ENCODE measurements at regions of chr1 and their contacts with region 1.

Region 1: GRCh38 chr1:23772049-23772853 is 6.0 kb upstream of the PITHD1 start:
- DNase-seq: peak; percentile 72 to 85 (median 77)
- H3K4me3 ChIP-seq: no peak overlapping the region
- H3K4me3 Mint-ChIP-seq: peak overlapping the region in 3 of 8 donors; percentile 24 to 60 (median 55)
- H3K27ac ChIP-seq: no peak overlapping the region
- H3K27ac Mint-ChIP-seq: peak overlapping the region in 1 of 7 donors; percentile 31
- H3K4me1 ChIP-seq: peaks cover 6% of the 10 kb centered on the region
- H3K4me1 Mint-ChIP-seq: peaks cover 3 to 10% (median 5%) of the 10 kb centered on the region in 4 donors
- H3K27me3 ChIP-seq: no peaks in the 10 kb centered on the region
- H3K27me3 Mint-ChIP-seq: no peaks in the 10 kb centered on the region

Region 2: DNA sequence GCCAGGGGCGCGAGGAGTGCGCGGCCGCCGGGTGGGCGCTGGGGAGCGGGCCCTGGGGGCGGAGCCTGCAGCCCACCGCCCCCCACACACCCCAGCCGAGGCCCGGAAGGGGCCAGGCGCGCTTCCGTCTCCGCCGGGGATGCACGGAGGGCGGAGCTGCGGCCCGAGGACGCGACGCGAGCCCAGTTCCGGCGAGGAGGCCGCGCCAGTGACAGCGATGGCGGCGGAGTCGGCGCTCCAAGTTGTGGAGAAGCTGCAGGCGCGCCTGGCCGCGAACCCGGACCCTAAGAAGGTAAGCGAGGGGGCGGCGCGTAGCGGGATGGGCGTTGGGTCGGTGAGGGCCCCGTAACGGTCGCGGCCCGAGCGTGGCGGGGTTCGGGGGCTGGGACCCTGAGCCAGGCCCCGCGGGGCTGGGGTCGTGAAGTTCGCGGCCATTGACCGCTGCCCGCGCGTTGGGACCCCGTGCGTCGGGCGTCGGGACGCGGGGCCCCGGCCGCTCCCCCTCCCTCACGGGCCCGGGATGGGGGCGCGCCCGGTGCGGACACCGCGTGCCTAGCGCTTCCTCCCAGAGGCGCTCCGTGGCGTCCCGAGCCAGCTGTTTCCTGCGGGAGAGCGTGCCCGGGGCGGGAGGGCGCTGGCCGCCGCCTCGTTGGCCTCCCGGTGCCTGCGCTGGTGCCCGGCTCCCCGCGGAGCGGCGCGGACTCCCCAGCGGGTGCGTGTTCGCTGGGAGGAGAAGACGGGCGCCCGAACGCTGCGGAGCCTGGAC is 28.8 kb before region 1 on chr1 and contains the start of gene ELOA:
- CTCF ChIA-PET with region 1: interaction called, 12 read pairs
- POLR2A ChIA-PET with region 1: interaction called, 3 read pairs
- intact Hi-C with region 1: loop called (anchors 5 kb)
- DNase-seq: peak; percentile 74 to 78 (median 77)
- H3K4me3 ChIP-seq: peak within 1 kb of the TSS; percentile 75 to 89
- H3K4me3 Mint-ChIP-seq: peak within 1 kb of the TSS; percentile 91 to 97 (median 92)
- H3K27ac ChIP-seq: peak within 1 kb of the TSS; percentile 87
- H3K27ac Mint-ChIP-seq: peak within 1 kb of the TSS; percentile 92 to 95 (median 94)
- H3K4me1 ChIP-seq: peaks cover 50% of the 10 kb centered on the region
- H3K4me1 Mint-ChIP-seq: peaks cover 37 to 57% (median 46%) of the 10 kb centered on the region in 4 donors
- H3K27me3 ChIP-seq: no peaks in the 10 kb centered on the region
- H3K27me3 Mint-ChIP-seq: no peaks in the 10 kb centered on the region
- total RNA-seq, gene ELOA: 28.3 to 31.7 TPM

Region 3: DNA sequence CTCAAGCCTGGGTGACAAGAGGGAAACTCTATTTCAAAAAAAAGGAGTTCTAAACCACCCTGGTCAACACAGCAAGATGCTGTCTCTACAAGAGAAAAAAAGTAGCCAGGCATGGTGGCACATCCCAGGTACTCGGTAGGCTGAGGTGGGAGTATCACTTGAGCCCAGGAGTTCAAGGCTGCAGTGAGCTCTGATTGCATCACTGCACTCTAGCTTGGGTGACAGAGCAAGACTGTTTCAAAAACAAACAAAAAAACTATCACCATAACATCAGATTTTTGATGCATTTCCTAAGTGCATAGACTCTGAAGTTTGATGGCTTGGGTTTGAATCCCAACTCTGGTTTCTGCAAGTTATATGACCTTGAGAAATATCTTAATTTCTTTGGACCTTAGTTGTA is 19.3 kb before region 1 on chr1:
- CTCF ChIA-PET with region 1: interaction called, 13 read pairs
- POLR2A ChIA-PET with region 1: no interaction called
- intact Hi-C with region 1: no loop called
- DNase-seq: no peak
- H3K4me3 ChIP-seq: no peak overlapping the region
- H3K4me3 Mint-ChIP-seq: no peak overlapping the region
- H3K27ac ChIP-seq: no peak overlapping the region
- H3K27ac Mint-ChIP-seq: no peak overlapping the region
- H3K4me1 ChIP-seq: peaks cover 11% of the 10 kb centered on the region
- H3K4me1 Mint-ChIP-seq: peaks cover 8 to 22% (median 14%) of the 10 kb centered on the region in 4 donors
- H3K27me3 ChIP-seq: no peaks in the 10 kb centered on the region
- H3K27me3 Mint-ChIP-seq: no peaks in the 10 kb centered on the region

Region 4: GRCh38 chr1:23854568-23854967 is 82.3 kb after region 1 on chr1:
- CTCF ChIA-PET with region 1: interaction called, 12 read pairs
- POLR2A ChIA-PET with region 1: no interaction called
- intact Hi-C with region 1: no loop called
- DNase-seq: no peak
- H3K4me3 ChIP-seq: no peak overlapping the region
- H3K4me3 Mint-ChIP-seq: no peak overlapping the region
- H3K27ac ChIP-seq: no peak overlapping the region
- H3K27ac Mint-ChIP-seq: no peak overlapping the region
- H3K4me1 ChIP-seq: no peaks in the 10 kb centered on the region
- H3K4me1 Mint-ChIP-seq: peaks cover 0 to 5% (median 2%) of the 10 kb centered on the region in 4 donors
- H3K27me3 ChIP-seq: no peaks in the 10 kb centered on the region
- H3K27me3 Mint-ChIP-seq: no peaks in the 10 kb centered on the region

Region 5: DNA sequence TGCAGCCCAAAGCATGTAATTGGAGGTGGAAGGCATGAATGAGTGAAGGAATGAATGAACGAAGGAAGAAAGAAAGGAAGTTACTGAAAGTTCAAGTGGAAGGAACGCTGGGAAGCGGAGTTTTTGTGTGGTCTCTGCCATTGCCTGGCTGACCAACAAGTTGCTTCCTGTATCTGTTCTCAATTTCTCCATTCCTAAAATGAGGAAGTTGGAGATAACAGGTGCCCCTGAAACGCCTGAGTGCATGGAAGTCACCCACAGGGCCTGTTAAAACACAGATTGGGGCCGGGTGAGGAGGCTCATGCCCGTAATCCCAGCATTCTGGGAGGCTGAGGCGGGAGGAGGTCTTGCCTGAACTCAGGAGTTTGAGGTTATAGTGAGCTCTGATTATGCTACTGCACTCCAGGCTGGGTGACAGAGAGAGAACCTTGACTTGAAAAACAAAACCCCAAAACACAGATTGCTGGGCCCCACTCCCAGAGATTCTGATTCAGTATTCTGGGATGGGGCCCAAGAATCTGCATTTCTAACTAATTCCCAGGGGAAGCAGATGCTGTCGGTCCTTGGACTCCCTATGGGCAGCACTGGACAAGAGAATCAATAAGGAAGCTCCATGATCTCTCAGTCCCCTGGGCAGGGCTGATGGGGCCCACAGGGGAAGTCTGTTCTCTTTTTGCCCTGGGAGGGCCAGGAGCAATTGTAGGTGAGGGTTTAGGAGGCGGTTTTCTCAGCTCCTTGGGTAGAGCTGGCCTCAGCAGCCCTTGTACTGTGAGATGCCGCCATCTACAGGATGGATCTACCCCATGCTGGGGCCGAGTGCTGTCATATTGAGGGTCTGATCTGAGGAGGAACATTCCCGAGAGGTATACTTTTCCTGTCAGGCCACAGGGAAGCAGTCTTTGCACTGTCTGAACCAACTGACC is 144.2 kb after region 1 on chr1:
- CTCF ChIA-PET with region 1: interaction called, 14 read pairs
- POLR2A ChIA-PET with region 1: interaction called, 4 read pairs
- intact Hi-C with region 1: loop called (anchors 1 kb)
- DNase-seq: peak; percentile 14 to 46 (median 22)
- H3K4me3 ChIP-seq: no peak overlapping the region
- H3K4me3 Mint-ChIP-seq: no peak overlapping the region
- H3K27ac ChIP-seq: no peak overlapping the region
- H3K27ac Mint-ChIP-seq: peak overlapping the region in 1 of 7 donors; percentile 53
- H3K4me1 ChIP-seq: peaks cover 17% of the 10 kb centered on the region
- H3K4me1 Mint-ChIP-seq: peaks cover 6 to 26% (median 16%) of the 10 kb centered on the region in 4 donors
- H3K27me3 ChIP-seq: no peaks in the 10 kb centered on the region
- H3K27me3 Mint-ChIP-seq: peaks cover 0 to 1% of the 10 kb centered on the region in 2 donors